ENCODE measurements at regions of chr6 and their contacts with region 1.

Region 1: DNA sequence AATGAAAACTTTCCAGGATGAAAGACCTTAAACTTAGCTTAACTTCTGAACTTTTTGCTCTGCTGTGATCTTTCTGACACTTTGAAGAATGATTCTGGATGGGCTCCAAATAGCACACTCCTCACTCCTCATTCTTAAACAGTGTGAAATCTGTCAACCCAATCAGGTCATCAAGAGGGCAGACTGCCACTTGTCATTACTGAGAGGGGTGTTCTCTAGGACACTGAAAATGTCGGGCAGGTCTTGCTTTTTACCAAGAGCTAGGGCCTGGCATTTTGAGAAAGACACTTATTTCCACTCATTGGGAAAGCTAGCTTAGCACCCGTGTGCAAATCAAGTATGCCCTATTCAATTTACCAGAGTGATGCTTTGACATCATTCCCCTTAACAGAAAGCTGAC is 122.2 kb downstream of the MTFR2 start:
- DNase-seq: no peak
- CTCF ChIP-seq: no peak

Region 2: GRCh38 chr6:136030131-136030530 is 97.7 kb before region 1 on chr6:
- CTCF ChIA-PET with region 1: no interaction called
- POLR2A ChIA-PET with region 1: no interaction called
- DNase-seq: no peak
- CTCF ChIP-seq: no peak

Region 3: GRCh38 chr6:136103763-136104311 is 24.0 kb before region 1 on chr6:
- CTCF ChIA-PET with region 1: no interaction called
- POLR2A ChIA-PET with region 1: no interaction called
- DNase-seq: no peak
- CTCF ChIP-seq: no peak

Region 4: GRCh38 chr6:136117081-136117480 is 10.8 kb before region 1 on chr6:
- CTCF ChIA-PET with region 1: interaction called, 11 read pairs
- POLR2A ChIA-PET with region 1: no interaction called
- DNase-seq: no peak
- CTCF ChIP-seq: no peak

Region 5: GRCh38 chr6:136146130-136146529 is 18.3 kb after region 1 on chr6:
- CTCF ChIA-PET with region 1: no interaction called
- POLR2A ChIA-PET with region 1: no interaction called
- DNase-seq: no peak
- CTCF ChIP-seq: no peak